ENCODE measurements at regions of chr18 and their contacts with region 1.

Region 1: GRCh38 chr18:75209129-75209950 is at the start of gene PTGR3:
- DNase-seq: peak; percentile 94
- H3K4me3 ChIP-seq: peak within 1 kb of the TSS; percentile 72 to 100 (median 86)
- H3K27ac ChIP-seq: peak within 1 kb of the TSS; percentile 98 to 99 (median 98)
- H3K4me1 ChIP-seq: peaks cover 0 to 62% (median 42%) of the 10 kb centered on the region in 4 donors
- H3K27me3 ChIP-seq: no peaks in the 10 kb centered on the region
- CTCF ChIP-seq: no peak
- EP300 ChIP-seq: no peak
- POLR2A ChIP-seq: no peak
- total RNA-seq, gene PTGR3: 24.3 to 33.8 (median 25.4) TPM

Region 2: GRCh38 chr18:74652392-74652988 is 556.9 kb before region 1 on chr18:
- intact Hi-C with region 1: loop called (anchors 2 kb)
- DNase-seq: no peak
- H3K4me3 ChIP-seq: no peak overlapping the region
- H3K27ac ChIP-seq: peak overlapping the region in 1 of 4 donors; percentile 46
- H3K4me1 ChIP-seq: peaks cover 0 to 25% (median 4%) of the 10 kb centered on the region in 4 donors
- H3K27me3 ChIP-seq: no peaks in the 10 kb centered on the region
- CTCF ChIP-seq: peak in 3 of 4 experiments; percentile 38 to 56 (median 55)
- EP300 ChIP-seq: no peak
- POLR2A ChIP-seq: no peak

Region 3: GRCh38 chr18:74906184-74906583 is 303.2 kb before region 1 on chr18:
- intact Hi-C with region 1: loop called (anchors 10 kb)
- DNase-seq: no peak
- H3K4me3 ChIP-seq: no peak overlapping the region
- H3K27ac ChIP-seq: peak overlapping the region in 3 of 4 donors; percentile 41 to 69 (median 49)
- H3K4me1 ChIP-seq: peaks cover 0 to 28% (median 12%) of the 10 kb centered on the region in 4 donors
- H3K27me3 ChIP-seq: no peaks in the 10 kb centered on the region
- CTCF ChIP-seq: no peak
- EP300 ChIP-seq: no peak
- POLR2A ChIP-seq: no peak

Region 4: GRCh38 chr18:75247611-75248421 is 38.5 kb after region 1 on chr18:
- intact Hi-C with region 1: loop called (anchors 5 kb)
- DNase-seq: no peak
- H3K4me3 ChIP-seq: peak overlapping the region; percentile 16 to 49 (median 44)
- H3K27ac ChIP-seq: peak overlapping the region; percentile 78 to 84 (median 81)
- H3K4me1 ChIP-seq: peaks cover 0 to 73% (median 44%) of the 10 kb centered on the region in 4 donors
- H3K27me3 ChIP-seq: no peaks in the 10 kb centered on the region
- CTCF ChIP-seq: no peak
- EP300 ChIP-seq: no peak
- POLR2A ChIP-seq: no peak

Region 5: GRCh38 chr18:75874401-75875089 is 665.2 kb after region 1 on chr18:
- intact Hi-C with region 1: loop called (anchors 5 kb)
- DNase-seq: no peak
- H3K4me3 ChIP-seq: peak overlapping the region in 3 of 4 donors; percentile 18 to 28 (median 25)
- H3K27ac ChIP-seq: peak overlapping the region; percentile 75 to 89 (median 84)
- H3K4me1 ChIP-seq: peaks cover 0 to 59% (median 48%) of the 10 kb centered on the region in 4 donors
- H3K27me3 ChIP-seq: no peaks in the 10 kb centered on the region
- CTCF ChIP-seq: no peak
- EP300 ChIP-seq: no peak
- POLR2A ChIP-seq: no peak

Measured in sigmoid colon (tissue), 7 donors.